ENCODE measurements at regions of chr14 and their contacts with region 1.

Region 1: GRCh38 chr14:100383727-100384158 is 60.6 kb downstream of the SLC25A47 start:
- DNase-seq: no peak
- H3K4me3 ChIP-seq: no peak overlapping the region
- H3K27me3 ChIP-seq: no peaks in the 10 kb centered on the region
- CTCF ChIP-seq: peak; percentile 87

Region 2: GRCh38 chr14:100440187-100440631 is 56.5 kb after region 1 on chr14:
- CTCF ChIA-PET with region 1: interaction called, 31 read pairs
- POLR2A ChIA-PET with region 1: no interaction called
- DNase-seq: no peak
- H3K4me3 ChIP-seq: no peak overlapping the region
- H3K27me3 ChIP-seq: no peaks in the 10 kb centered on the region
- CTCF ChIP-seq: peak; percentile 67

Region 3: DNA sequence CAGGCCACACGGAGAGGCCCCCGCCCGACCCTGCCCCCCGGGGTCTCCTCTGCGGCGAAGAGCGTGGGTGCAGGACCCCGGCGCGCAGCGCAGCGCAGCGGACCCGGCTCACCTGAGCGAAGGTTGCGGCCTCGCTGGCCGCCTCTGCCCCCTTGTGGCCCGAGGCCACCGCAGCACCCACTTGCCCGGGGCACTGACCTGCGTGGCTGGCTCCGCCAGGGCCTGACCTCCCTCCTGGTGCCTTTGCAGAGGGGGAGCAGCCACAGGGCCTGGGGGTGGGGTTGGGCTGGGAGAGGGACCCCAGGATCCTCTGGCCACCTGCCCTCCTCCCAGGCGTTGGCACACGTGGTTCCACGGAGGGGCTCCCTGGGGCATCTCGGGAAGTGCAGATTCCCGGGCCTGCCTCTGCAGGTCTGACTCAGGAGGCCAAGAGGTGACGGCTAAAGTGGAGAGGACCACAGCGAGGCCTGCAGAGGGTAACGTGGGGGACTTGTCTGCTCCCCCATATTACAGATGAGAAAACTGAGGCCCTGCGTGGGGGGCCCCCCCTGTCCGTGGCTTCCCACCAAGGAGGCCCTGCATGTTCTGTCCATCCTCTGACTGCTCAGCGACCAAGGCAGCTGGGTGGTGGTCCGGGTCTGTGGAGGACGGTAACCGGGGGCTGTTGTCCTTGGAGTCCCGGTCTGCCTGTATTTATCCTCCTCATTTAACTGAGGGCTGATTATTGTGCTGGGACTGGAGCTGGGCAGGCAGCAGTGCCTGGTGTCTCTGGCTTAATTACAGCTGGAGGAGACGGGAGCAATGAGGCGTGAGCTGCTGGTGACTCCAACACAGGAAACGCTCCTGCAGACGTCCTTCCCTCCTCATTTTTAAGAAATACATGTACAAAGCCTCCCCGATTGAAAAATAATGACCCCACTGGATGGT is 271.3 kb after region 1 on chr14:
- CTCF ChIA-PET with region 1: interaction called, 109 read pairs
- POLR2A ChIA-PET with region 1: no interaction called
- DNase-seq: no peak
- H3K4me3 ChIP-seq: no peak overlapping the region
- H3K27me3 ChIP-seq: peaks cover 14% of the 10 kb centered on the region
- CTCF ChIP-seq: peak; percentile 51

Region 4: GRCh38 chr14:101235335-101236103 is 851.8 kb after region 1 on chr14:
- CTCF ChIA-PET with region 1: interaction called, 11 read pairs
- POLR2A ChIA-PET with region 1: no interaction called
- DNase-seq: no peak
- H3K4me3 ChIP-seq: no peak overlapping the region
- H3K27me3 ChIP-seq: no peaks in the 10 kb centered on the region; the same call in 1 of the 2 replicates
- CTCF ChIP-seq: peak; percentile 76